ENCODE measurements at regions of chr18 and their contacts with region 1.

Region 1: GRCh38 chr18:45879681-45880655 is 54.5 kb downstream of the SIGLEC15 start:
- DNase-seq: peak; percentile 64
- H3K4me3 Mint-ChIP-seq: no peak overlapping the region
- H3K27ac Mint-ChIP-seq: no peak overlapping the region
- H3K4me1 Mint-ChIP-seq: peaks cover 14% of the 10 kb centered on the region
- H3K27me3 Mint-ChIP-seq: no peaks in the 10 kb centered on the region

Region 2: DNA sequence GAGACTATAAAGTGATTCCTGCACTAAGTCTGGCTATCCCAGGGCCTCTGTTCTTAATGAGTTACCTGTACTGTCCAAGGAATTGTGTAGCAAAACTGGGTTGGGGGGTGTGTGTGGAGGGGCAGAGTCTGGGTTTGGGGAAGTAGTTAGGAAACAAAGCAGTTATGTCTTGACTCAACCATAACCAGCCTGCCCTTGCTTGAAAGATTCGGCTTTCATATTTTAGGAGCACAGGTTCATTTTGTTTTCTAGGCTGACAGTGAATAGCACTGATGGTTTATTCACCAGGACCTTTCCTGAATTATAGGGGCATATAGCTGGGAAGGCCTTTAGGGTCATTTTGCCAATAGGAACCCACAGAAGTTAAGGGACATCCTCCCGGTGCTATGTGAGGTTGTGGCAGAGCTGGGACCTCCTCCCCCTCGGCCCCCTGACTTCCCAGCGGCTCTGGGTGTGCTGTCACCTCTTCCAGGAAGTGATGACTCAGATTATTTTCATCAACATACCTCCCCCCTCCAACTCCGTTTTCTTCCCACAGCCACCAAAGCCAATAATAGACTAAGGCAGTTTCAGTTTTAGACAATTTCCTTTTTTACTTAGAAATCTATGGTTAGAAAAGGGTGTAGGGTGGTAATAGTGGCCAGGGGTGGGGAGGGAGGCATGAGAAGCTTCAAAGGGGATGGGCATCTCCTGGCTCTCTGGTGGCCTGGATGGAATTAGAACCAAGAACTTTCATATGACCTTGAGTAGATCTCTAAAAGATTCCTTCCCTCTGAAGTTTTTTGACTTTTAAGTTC is 1154.5 kb before region 1 on chr18:
- intact Hi-C with region 1: loop called (anchors 10 kb)
- DNase-seq: peak; percentile 72
- H3K4me3 Mint-ChIP-seq: peak overlapping the region; percentile 38
- H3K27ac Mint-ChIP-seq: peak overlapping the region; percentile 88
- H3K4me1 Mint-ChIP-seq: peaks cover 96% of the 10 kb centered on the region
- H3K27me3 Mint-ChIP-seq: no peaks in the 10 kb centered on the region

Region 3: DNA sequence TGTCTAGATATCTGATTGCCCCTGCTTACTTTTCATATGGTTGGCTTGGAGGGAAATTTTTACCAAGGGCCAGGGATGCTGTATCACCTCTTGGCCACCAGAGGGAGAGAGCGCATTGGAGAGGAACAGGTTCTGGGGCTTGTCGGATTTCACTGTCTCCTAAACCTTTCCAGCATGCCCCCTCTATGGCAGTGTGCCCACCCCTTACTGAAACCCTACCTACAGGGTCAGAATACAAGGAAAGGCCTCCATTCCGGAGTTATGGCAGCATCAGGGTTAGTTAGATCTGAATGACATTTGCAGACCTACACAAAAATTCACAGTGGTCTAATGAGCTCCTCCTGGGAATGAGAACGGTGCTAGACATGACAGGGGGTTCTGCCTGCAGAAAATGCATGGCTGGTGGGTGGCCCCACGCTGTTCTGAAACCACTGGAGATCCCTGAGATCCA is 258.9 kb before region 1 on chr18:
- intact Hi-C with region 1: loop called (anchors 1 kb)
- DNase-seq: peak; percentile 9
- H3K4me3 Mint-ChIP-seq: no peak overlapping the region
- H3K27ac Mint-ChIP-seq: no peak overlapping the region
- H3K4me1 Mint-ChIP-seq: no peaks in the 10 kb centered on the region
- H3K27me3 Mint-ChIP-seq: peaks cover 15% of the 10 kb centered on the region

Region 4: GRCh38 chr18:45722899-45723298 is 157.1 kb before region 1 on chr18:
- intact Hi-C with region 1: loop called (anchors 1 kb)
- DNase-seq: peak; percentile 54
- H3K4me3 Mint-ChIP-seq: no peak overlapping the region
- H3K27ac Mint-ChIP-seq: no peak overlapping the region
- H3K4me1 Mint-ChIP-seq: no peaks in the 10 kb centered on the region
- H3K27me3 Mint-ChIP-seq: peaks cover 21% of the 10 kb centered on the region

Region 5: DNA sequence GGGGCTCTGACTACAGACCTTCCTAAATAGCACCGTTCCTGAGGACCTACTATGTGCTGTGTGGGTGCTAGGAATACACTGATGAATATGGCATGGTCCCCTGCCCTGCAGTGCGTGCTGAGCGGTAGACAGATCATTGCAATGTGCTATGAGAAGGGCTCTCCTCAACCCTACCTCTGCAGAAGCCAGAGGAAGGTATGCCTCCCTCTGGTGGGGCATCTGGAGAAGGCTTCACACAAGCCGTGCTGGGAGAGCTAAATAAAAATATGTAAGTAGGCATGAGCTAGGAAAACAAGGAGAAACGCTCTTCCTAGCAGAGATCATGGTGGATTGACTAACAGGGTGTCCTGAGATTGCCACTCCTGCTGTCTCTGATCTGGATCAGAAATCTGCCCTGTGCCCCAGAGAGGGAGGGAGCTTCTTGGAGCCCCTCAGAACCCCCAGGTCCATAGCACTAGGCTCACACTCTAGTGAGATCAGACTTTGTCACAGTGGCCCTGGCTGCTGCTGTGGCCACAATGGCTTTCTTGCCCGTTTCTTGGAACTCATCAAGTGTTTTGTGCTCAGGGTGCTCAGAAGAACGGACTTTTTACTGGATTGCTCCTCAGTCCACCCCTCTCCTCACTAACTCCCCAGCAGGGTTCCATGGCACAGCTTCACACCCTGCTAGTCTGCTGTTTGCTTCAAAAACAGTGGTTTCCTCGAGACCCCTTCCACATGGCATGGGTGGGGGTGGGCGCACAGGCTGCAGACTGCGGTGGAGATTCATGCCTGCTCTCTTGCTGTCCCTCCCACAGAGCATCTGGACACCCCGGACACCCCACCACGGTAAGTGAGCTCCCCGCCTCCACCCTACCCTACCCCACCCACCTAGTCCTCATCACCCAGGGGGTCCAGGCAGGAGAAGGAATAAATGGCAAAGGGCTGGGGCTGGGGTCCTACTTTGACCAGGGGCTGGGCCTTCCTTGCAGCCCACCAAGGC is 40.3 kb before region 1 on chr18:
- intact Hi-C with region 1: loop called (anchors 5 kb)
- DNase-seq: no peak
- H3K4me3 Mint-ChIP-seq: no peak overlapping the region
- H3K27ac Mint-ChIP-seq: no peak overlapping the region
- H3K4me1 Mint-ChIP-seq: no peaks in the 10 kb centered on the region
- H3K27me3 Mint-ChIP-seq: peaks cover 43% of the 10 kb centered on the region

Region 6: GRCh38 chr18:45863469-45863868 is 16.5 kb before region 1 on chr18:
- intact Hi-C with region 1: loop called (anchors 2 kb)
- DNase-seq: no peak
- H3K4me3 Mint-ChIP-seq: no peak overlapping the region
- H3K27ac Mint-ChIP-seq: no peak overlapping the region
- H3K4me1 Mint-ChIP-seq: peaks cover 7% of the 10 kb centered on the region
- H3K27me3 Mint-ChIP-seq: no peaks in the 10 kb centered on the region

Region 7: DNA sequence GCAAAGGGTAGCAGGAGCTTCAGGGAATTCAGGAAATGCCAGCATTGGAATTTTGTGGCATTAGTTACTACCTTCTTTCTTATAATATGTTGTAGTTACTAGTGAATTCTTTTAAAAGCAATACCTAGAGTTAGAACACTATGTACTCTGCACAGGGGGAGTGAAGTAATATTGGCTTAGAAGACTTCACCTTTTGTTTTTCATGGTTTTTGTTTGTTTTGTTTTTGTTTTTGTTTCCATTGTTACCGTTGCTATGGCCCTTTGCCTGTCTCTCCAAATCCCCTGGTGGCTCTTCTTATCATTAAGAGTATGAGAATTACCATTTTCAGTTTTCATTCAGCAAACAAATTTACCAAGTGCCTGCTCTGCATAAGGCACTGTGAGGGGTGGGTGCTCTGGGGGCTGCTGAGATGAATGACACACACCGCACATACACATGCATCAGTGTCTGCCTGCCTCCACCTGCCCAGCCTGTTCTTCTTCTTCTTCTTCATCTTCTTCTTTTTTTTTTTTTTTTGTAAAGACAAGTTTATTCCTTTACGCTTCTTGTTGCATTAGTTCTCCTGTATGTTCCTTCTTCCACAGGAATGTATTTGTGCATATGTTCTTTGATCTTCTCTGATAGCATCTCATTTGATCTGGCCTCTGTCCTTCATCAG is 384.4 kb after region 1 on chr18:
- intact Hi-C with region 1: no loop called
- DNase-seq: no peak
- H3K4me3 Mint-ChIP-seq: no peak overlapping the region
- H3K27ac Mint-ChIP-seq: peak overlapping the region; percentile 66
- H3K4me1 Mint-ChIP-seq: peaks cover 80% of the 10 kb centered on the region
- H3K27me3 Mint-ChIP-seq: no peaks in the 10 kb centered on the region